ENCODE measurements at regions of chr20 and their contacts with region 1.

Region 1: GRCh38 chr20:38805502-38805957 is at the start of gene PPP1R16B:
- DNase-seq: peak; percentile 90
- ATAC-seq: peak; percentile 83
- H3K4me3 Mint-ChIP-seq: peak within 1 kb of the TSS; percentile 85
- H3K27ac Mint-ChIP-seq: peak within 1 kb of the TSS; percentile 99
- H3K4me1 Mint-ChIP-seq: peaks cover 51% of the 10 kb centered on the region
- H3K27me3 Mint-ChIP-seq: no peaks in the 10 kb centered on the region
- CTCF ChIP-seq: no peak
- total RNA-seq, gene PPP1R16B: 74.9 to 81.4 TPM

Region 2: DNA sequence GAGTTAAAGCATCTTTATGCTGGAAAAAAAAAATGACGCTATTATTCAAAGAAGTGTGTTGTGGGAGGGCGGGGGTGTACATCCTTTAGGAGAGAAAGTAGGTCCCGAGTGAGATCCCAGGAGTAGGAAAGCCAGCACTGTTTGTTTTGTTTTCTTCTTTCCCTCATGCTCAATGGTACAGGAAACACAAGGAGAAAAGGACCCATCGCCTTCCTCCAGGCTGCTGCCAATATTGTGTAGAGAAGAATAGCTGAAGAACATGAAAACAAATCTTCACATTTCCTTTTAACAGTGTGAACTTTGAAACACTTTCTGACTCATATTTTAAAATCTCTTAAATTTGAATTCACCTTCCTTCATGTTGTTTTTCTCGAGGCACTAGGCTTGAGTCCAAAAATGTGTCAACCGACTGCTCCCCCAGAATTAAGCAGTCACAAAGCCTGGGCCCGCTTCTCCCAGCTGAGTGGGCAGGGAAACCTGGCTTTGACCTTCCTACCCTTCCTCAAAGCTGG is 22.3 kb after region 1 on chr20:
- CTCF ChIA-PET with region 1: interaction called, 4 read pairs
- POLR2A ChIA-PET with region 1: interaction called, 11 read pairs
- intact Hi-C with region 1: no loop called
- DNase-seq: no peak
- ATAC-seq: peak; percentile 42
- H3K4me3 Mint-ChIP-seq: no peak overlapping the region
- H3K27ac Mint-ChIP-seq: peak overlapping the region; percentile 79
- H3K4me1 Mint-ChIP-seq: peaks cover 86% of the 10 kb centered on the region
- H3K27me3 Mint-ChIP-seq: no peaks in the 10 kb centered on the region
- CTCF ChIP-seq: no peak

Region 3: GRCh38 chr20:38842558-38842981 is 37.0 kb after region 1 on chr20:
- CTCF ChIA-PET with region 1: interaction called, 11 read pairs
- POLR2A ChIA-PET with region 1: interaction called, 5 read pairs
- intact Hi-C with region 1: loop called (anchors 5 kb)
- DNase-seq: peak; percentile 88
- ATAC-seq: peak; percentile 77
- H3K4me3 Mint-ChIP-seq: peak overlapping the region; percentile 61
- H3K27ac Mint-ChIP-seq: peak overlapping the region; percentile 94
- H3K4me1 Mint-ChIP-seq: peaks cover 84% of the 10 kb centered on the region
- H3K27me3 Mint-ChIP-seq: no peaks in the 10 kb centered on the region
- CTCF ChIP-seq: no peak

Region 4: GRCh38 chr20:38883081-38883980 is 77.8 kb after region 1 on chr20:
- CTCF ChIA-PET with region 1: interaction called, 5 read pairs
- POLR2A ChIA-PET with region 1: interaction called, 25 read pairs
- intact Hi-C with region 1: no loop called
- DNase-seq: no peak
- ATAC-seq: peak; percentile 17
- H3K4me3 Mint-ChIP-seq: no peak overlapping the region
- H3K27ac Mint-ChIP-seq: peak overlapping the region; percentile 75
- H3K4me1 Mint-ChIP-seq: peaks cover 58% of the 10 kb centered on the region
- H3K27me3 Mint-ChIP-seq: no peaks in the 10 kb centered on the region
- CTCF ChIP-seq: no peak

Measured in activated CD8-positive, alpha-beta T cell treated with anti-CD3 and anti-CD28 coated beads for 36 hours (primary cell).